ENCODE measurements at regions of chr4 and their contacts with region 1.

Region 1: GRCh38 chr4:154982187-154983047 is 201.3 kb downstream of the RBM46 start:
- DNase-seq: peak; percentile 78
- H3K4me3 Mint-ChIP-seq: no peak overlapping the region
- H3K27ac Mint-ChIP-seq: no peak overlapping the region
- H3K4me1 Mint-ChIP-seq: no peaks in the 10 kb centered on the region
- H3K27me3 Mint-ChIP-seq: no peaks in the 10 kb centered on the region

Region 2: GRCh38 chr4:155179216-155179615 is 196.8 kb after region 1 on chr4:
- intact Hi-C with region 1: no loop called
- DNase-seq: no peak
- H3K4me3 Mint-ChIP-seq: no peak overlapping the region
- H3K27ac Mint-ChIP-seq: no peak overlapping the region
- H3K4me1 Mint-ChIP-seq: no peaks in the 10 kb centered on the region
- H3K27me3 Mint-ChIP-seq: no peaks in the 10 kb centered on the region

Region 3: DNA sequence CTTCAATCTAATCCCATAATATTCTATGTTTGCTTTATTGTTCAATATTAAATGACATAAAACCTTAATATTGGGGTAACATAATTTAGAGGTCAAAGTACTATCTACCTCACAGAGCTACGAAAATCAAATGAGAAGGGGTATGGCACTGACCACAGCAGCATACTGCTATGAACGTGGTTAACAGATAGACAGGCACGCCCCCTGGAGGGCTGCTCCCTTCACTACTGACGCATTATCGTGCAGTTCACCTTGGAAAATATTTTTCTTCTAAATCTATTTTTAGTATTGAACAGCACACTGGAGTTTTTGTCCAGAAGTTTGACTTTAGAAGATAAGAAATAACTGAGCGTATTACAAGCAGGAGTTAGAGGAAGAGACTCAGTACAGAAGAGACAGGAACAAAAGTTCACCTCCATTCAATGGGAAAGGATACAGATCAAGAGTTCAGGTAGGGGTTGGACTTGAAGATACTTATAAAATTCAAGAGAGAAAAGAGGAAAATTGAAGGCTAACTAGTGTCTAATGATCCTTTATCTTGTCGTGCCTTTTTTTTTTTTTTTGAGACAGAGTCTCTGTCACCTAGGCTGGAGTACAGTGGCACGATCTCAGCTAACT is 371.6 kb after region 1 on chr4:
- intact Hi-C with region 1: loop called (anchors 5 kb)
- DNase-seq: peak; percentile 77
- H3K4me3 Mint-ChIP-seq: no peak overlapping the region
- H3K27ac Mint-ChIP-seq: no peak overlapping the region
- H3K4me1 Mint-ChIP-seq: peaks cover 1% of the 10 kb centered on the region
- H3K27me3 Mint-ChIP-seq: no peaks in the 10 kb centered on the region

Region 4: DNA sequence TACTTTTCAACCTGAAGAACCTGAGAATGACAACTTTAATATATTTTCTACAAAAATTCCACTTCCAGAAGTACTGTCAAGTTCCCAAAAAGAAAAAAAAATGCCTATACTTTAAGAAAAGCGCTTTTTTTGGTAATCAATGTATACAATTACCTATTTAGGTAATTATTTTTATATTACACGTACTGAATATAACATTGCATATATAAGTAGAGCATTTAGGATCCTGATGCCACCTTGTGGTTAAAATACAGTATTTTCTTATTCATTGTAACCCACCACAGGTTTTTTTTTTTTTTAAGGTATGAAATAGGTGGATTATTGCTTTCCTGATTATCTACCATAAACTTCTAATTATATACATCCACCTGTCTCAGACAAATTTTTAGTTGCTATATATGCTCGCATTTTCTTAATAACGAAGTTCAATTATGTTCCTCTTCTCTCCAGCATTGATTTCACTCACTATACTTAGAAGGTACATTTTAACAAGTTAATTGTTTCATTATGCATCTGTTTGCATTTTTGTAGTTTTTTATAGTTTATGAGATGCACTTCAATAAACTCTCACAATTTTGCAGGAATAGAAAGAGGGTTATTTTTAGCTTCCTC is 389.1 kb after region 1 on chr4:
- intact Hi-C with region 1: loop called (anchors 5 kb)
- DNase-seq: no peak
- H3K4me3 Mint-ChIP-seq: no peak overlapping the region
- H3K27ac Mint-ChIP-seq: no peak overlapping the region
- H3K4me1 Mint-ChIP-seq: peaks cover 8% of the 10 kb centered on the region
- H3K27me3 Mint-ChIP-seq: no peaks in the 10 kb centered on the region

Region 5: GRCh38 chr4:155787113-155787710 is 804.8 kb after region 1 on chr4:
- intact Hi-C with region 1: loop called (anchors 2 kb)
- DNase-seq: peak; percentile 73
- H3K4me3 Mint-ChIP-seq: no peak overlapping the region
- H3K27ac Mint-ChIP-seq: no peak overlapping the region
- H3K4me1 Mint-ChIP-seq: no peaks in the 10 kb centered on the region
- H3K27me3 Mint-ChIP-seq: no peaks in the 10 kb centered on the region

Measured in activated CD4-positive, alpha-beta T cell treated with anti-CD3 and anti-CD28 coated beads, Interleukin-2, amount 10 ng/mL, durations not matched to agents 24 days and 14 days (primary cell).